Naive thymus-derived CD4-positive, alpha-beta T cell (primary cell): ENCODE measurements at regions of chr2 and their contacts with region 1.

Region 1: GRCh38 chr2:105873721-105874120 is 129.0 kb downstream of the NCK2 start:
- DNase-seq: peak in 1 of 9 donors; percentile 80
- ATAC-seq: peak; percentile 70
- H3K4me3 ChIP-seq: no peak overlapping the region
- H3K4me3 Mint-ChIP-seq: peak overlapping the region in 4 of 10 donors; percentile 8 to 73 (median 22)
- H3K27ac ChIP-seq: peak overlapping the region; percentile 1
- H3K27ac Mint-ChIP-seq: peak overlapping the region; percentile 26 to 90 (median 80)
- H3K4me1 ChIP-seq: peaks cover 74 to 87% of the 10 kb centered on the region in 2 donors
- H3K4me1 Mint-ChIP-seq: peaks cover 65 to 100% (median 97%) of the 10 kb centered on the region in 7 donors
- H3K27me3 ChIP-seq: no peaks in the 10 kb centered on the region
- H3K27me3 Mint-ChIP-seq: no peaks in the 10 kb centered on the region

Region 2: GRCh38 chr2:105739426-105739825 is 134.3 kb before region 1 on chr2:
- CTCF ChIA-PET with region 1: no interaction called
- POLR2A ChIA-PET with region 1: no interaction called
- intact Hi-C with region 1: no loop called
- DNase-seq: no peak
- ATAC-seq: no peak
- H3K4me3 ChIP-seq: peak overlapping the region; percentile 37
- H3K4me3 Mint-ChIP-seq: peak overlapping the region; percentile 54 to 84 (median 80)
- H3K27ac ChIP-seq: peak overlapping the region; percentile 74
- H3K27ac Mint-ChIP-seq: peak overlapping the region; percentile 90 to 99 (median 96)
- H3K4me1 ChIP-seq: peaks cover 50 to 52% of the 10 kb centered on the region in 2 donors
- H3K4me1 Mint-ChIP-seq: peaks cover 45 to 87% (median 82%) of the 10 kb centered on the region in 7 donors
- H3K27me3 ChIP-seq: no peaks in the 10 kb centered on the region
- H3K27me3 Mint-ChIP-seq: no peaks in the 10 kb centered on the region

Region 3: GRCh38 chr2:105888625-105889400 is 15.1 kb after region 1 on chr2:
- CTCF ChIA-PET with region 1: no interaction called
- POLR2A ChIA-PET with region 1: no interaction called
- intact Hi-C with region 1: loop called in 1 of 2 experiments (anchors 1 kb)
- DNase-seq: no peak
- ATAC-seq: peak; percentile 74
- H3K4me3 ChIP-seq: no peak overlapping the region
- H3K4me3 Mint-ChIP-seq: peak overlapping the region in 3 of 10 donors; percentile 13 to 52 (median 37)
- H3K27ac ChIP-seq: no peak overlapping the region
- H3K27ac Mint-ChIP-seq: peak overlapping the region in 5 of 9 donors; percentile 44 to 83 (median 53)
- H3K4me1 ChIP-seq: peaks cover 38 to 44% of the 10 kb centered on the region in 2 donors
- H3K4me1 Mint-ChIP-seq: peaks cover 36 to 76% (median 67%) of the 10 kb centered on the region in 7 donors
- H3K27me3 ChIP-seq: no peaks in the 10 kb centered on the region
- H3K27me3 Mint-ChIP-seq: no peaks in the 10 kb centered on the region